ENCODE measurements at regions of chr10 and their contacts with region 1.

Region 1: DNA sequence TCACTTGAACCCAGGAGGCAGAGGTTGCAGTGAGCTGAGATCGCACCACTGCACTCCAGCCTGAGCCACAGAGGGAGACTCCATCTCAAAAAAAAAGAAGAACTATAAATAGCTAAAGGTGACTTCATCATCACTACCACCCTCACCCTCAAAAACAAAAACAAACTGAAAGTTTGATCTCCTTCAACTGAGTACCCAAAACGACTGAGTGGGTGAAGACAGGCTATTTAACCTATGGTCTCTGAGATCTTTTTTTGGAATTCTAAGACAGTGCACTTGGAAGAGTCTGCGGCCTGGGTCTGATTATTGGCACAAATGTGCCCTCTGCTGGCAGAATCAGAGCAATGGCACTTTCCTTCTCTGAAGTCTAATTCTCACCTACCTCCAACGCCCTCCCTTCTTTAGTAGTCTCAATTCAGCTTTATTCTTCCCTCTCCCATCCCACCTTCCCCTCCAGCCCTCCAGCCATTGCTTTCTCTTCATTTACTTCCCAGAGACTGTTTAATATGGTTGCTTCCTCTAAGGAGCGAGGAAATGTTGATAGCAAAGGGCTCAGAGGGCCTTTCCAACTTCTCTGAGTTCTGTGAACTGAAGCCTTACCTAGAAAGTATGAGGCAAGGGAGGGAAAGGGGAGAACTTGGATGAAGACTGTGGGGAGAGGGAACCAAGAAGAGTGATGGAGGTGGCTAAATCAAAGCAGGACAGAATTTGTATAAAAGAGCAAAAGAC is 2.9 kb upstream of the MYOZ1 start:
- DNase-seq: peak; percentile 72
- H3K4me3 ChIP-seq: no peak overlapping the region
- H3K27ac ChIP-seq: no peak overlapping the region
- H3K4me1 ChIP-seq: peaks cover 8% of the 10 kb centered on the region
- H3K27me3 ChIP-seq: no peaks in the 10 kb centered on the region
- CTCF ChIP-seq: peak; percentile 84 to 95 (median 87)
- POLR2A ChIP-seq: no peak

Region 2: GRCh38 chr10:73398013-73398412 is 246.2 kb before region 1 on chr10:
- intact Hi-C with region 1: no loop called
- DNase-seq: no peak
- H3K4me3 ChIP-seq: no peak overlapping the region
- H3K27ac ChIP-seq: no peak overlapping the region
- H3K4me1 ChIP-seq: no peaks in the 10 kb centered on the region
- H3K27me3 ChIP-seq: no peaks in the 10 kb centered on the region
- CTCF ChIP-seq: no peak
- POLR2A ChIP-seq: no peak

Region 3: DNA sequence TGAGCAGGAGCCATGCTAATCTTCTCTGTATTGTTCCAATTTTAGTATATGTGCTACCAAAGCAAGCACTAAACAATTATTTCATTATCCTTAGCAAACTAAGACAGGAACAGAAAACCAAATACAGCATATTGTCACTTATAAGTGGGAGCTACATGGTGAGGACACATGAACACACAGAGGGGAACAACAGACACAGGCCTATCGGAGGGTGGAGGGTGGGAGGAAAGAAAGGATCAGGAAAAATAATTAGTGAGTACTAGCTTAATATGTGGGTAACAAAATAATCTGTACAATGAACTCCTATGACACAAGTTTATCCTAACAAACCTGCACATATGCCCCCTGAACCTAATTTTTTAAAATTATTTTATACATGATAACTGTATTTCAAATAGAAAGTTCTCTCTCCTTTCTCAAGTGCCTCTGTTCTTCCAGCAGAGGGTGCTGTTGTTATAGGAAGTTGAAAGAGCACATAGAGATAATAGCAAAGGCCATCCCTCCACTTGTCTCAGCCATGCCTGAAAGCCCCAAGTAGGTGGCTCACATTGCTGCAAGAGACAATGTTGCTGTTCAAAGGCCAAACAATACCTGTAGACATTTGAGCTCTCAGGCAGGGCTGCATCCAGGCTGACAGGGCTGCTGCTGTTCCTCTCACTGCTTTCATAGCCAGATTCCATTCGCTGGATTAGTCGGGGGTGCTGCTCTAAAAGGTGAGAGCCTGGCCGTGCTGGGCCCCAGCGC is 114.9 kb before region 1 on chr10:
- intact Hi-C with region 1: loop called (anchors 5 kb)
- DNase-seq: peak; percentile 73
- H3K4me3 ChIP-seq: no peak overlapping the region
- H3K27ac ChIP-seq: no peak overlapping the region
- H3K4me1 ChIP-seq: no peaks in the 10 kb centered on the region
- H3K27me3 ChIP-seq: no peaks in the 10 kb centered on the region
- CTCF ChIP-seq: peak; percentile 78 to 91 (median 83)
- POLR2A ChIP-seq: no peak

Measured in testis (tissue), 5 donors.